Activated T-helper 1 cell treated with anti-CD3 and anti-CD28 coated beads, Interleukin-12 subunit alpha, Interleukin-12 subunit beta, Interleukin-2, Interleukin-4 antibody, amounts not matched to agents 30 ng/mL and 10 ng/mL and 1 ng/mL, durations not matched to agents 14 hours and 24 hours and 36 hours (primary cell): ENCODE measurements at regions of chr17 and their contacts with region 1.

Region 1: DNA sequence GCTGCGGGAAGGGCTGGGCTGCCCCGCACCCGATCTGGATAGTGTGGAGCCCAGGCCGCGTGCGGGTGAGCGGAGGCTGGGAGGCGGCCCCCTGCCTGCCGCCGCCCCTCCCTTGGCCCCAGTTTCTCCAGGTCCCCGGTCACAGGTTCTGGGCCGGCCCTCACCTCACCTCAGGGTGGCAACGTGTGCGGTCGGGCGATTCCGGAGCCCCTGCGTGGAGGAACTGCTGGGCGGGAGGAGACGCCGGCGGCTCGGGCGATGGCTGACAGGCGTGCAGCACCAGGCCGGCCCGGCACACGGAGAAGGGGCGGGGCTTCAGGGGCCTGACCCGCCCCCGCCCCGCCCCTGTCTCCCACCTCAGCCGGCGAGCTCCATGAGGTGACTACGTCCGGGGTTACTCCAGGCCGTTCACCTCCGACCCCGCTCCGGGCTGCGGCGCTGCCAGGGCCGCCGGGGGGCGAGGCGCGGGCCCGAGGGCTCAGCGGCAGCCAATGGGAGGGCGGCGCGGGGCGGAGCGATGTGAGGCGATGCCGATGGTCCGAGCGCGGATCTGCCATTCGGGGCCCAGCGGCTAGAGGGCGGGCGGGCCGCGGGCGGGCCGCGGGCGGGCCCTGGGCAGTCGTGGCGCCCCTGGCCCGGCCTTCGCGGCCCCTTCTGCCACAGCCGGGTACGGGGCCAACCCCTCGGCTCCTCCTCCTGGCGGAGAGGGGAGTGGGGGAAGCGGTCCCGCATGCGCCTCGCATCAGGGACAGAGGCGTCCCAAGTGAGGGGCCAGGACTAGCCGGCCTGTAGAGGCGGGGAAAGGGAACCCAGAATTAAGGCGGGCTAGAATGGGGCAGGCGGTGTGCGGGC is 16.7 kb upstream of the C17orf78 start:
- DNase-seq: peak; percentile 90
- H3K4me3 Mint-ChIP-seq: peak overlapping the region; percentile 98
- H3K27ac Mint-ChIP-seq: peak overlapping the region; percentile 92
- H3K4me1 Mint-ChIP-seq: peaks cover 32% of the 10 kb centered on the region
- H3K27me3 Mint-ChIP-seq: no peaks in the 10 kb centered on the region

Region 2: DNA sequence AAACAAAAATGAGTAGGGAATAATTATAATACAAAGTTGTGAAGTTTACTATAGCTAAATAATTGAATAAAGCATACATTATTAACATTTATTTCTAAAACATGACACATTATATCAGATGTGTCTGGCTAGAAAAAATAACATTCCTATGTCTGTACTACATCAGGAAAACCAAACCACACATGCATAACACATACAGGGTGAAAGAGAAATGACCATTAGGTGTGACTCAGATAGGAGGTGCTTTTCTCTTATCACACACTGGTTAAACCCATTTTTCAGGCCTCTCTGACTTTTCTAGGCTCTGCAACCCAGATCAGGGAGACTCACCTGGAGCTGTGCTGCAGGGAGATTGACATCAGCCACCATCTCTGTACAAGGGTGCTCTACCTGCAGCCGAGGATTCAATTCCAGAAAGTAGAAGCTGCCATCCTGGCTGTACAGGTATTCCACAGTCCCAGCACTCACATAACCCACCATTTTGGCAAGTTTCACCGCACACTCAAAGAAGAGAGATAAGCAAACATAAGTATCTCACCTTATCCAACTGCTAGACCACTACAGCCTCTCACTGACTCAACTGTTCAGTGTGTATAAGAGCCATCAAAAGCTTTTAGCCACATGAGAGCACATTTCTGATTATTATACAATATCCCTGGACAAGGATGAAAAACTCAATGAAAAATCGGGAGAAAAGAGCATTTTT is 99.9 kb before region 1 on chr17:
- intact Hi-C with region 1: no loop called
- DNase-seq: no peak
- H3K4me3 Mint-ChIP-seq: no peak overlapping the region
- H3K27ac Mint-ChIP-seq: no peak overlapping the region
- H3K4me1 Mint-ChIP-seq: no peaks in the 10 kb centered on the region
- H3K27me3 Mint-ChIP-seq: no peaks in the 10 kb centered on the region

Region 3: DNA sequence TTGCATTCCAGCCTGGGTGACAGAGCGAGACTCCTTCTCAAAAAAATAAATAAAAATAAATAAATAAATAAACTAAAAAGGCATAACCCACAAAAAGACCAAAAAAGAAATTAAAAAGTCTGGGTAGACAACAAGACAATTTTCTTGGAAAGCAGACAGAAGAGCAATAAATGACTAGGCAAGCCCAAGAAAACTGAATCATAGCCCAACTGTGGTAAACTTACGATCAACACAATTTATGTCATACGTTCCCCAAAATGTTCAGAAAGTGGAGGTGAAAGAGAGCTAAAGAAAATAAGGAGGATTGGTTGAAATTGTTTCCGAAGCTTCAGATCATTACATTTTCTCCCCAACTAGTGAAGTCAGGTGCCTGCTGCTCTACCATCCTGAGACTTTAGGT is 14.5 kb before region 1 on chr17:
- intact Hi-C with region 1: loop called (anchors 2 kb)
- DNase-seq: no peak
- H3K4me3 Mint-ChIP-seq: no peak overlapping the region
- H3K27ac Mint-ChIP-seq: peak overlapping the region; percentile 29
- H3K4me1 Mint-ChIP-seq: peaks cover 22% of the 10 kb centered on the region
- H3K27me3 Mint-ChIP-seq: no peaks in the 10 kb centered on the region

Region 4: DNA sequence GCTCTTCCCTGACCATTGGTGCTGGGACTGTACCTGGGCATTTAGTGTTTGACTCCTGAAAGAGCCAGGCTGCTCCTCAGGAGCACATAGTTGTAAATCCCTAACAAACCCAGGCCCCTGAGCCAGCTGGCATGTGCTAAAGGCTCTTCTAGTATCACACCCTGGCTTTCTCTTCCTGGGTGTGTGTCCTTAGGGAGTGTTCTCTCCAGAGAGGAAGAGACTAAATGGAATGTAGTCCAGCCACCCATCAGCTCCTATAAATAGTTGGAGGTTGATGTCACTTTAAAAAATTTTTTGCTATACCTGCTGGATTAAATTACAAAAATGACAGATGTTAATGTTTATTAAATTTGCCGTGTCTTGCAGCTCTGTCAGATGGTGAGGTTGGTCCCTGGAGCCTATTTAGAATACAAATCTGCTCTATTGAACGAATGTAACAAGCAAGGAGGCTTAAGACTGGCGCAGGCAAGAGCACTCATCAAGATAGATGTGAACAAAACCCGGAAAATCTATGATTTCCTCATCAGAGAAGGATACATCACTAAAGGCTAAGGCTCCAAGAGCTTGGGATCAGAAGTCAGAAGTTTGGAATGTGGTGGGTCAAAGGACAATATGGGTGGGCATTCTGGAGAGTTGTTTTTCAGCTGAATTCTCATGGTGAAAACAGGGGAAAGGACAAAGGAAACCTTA is 117.5 kb after region 1 on chr17:
- intact Hi-C with region 1: no loop called
- DNase-seq: no peak
- H3K4me3 Mint-ChIP-seq: no peak overlapping the region
- H3K27ac Mint-ChIP-seq: no peak overlapping the region
- H3K4me1 Mint-ChIP-seq: peaks cover 4% of the 10 kb centered on the region
- H3K27me3 Mint-ChIP-seq: no peaks in the 10 kb centered on the region